ENCODE measurements at regions of chr14 and their contacts with region 1.

Region 1: GRCh38 chr14:100375963-100376735 is 53.0 kb downstream of the SLC25A47 start:
- DNase-seq: peak; percentile 93
- H3K4me3 ChIP-seq: peak within 1 kb of the TSS; percentile 75 to 83
- H3K27ac ChIP-seq: peak within 1 kb of the TSS; percentile 70 to 84
- H3K4me1 ChIP-seq: peaks cover 21% of the 10 kb centered on the region
- H3K27me3 ChIP-seq: no peaks in the 10 kb centered on the region
- CTCF ChIP-seq: peak in 1 of 3 experiments; percentile 12
- POLR2A ChIP-seq: no peak

Region 2: DNA sequence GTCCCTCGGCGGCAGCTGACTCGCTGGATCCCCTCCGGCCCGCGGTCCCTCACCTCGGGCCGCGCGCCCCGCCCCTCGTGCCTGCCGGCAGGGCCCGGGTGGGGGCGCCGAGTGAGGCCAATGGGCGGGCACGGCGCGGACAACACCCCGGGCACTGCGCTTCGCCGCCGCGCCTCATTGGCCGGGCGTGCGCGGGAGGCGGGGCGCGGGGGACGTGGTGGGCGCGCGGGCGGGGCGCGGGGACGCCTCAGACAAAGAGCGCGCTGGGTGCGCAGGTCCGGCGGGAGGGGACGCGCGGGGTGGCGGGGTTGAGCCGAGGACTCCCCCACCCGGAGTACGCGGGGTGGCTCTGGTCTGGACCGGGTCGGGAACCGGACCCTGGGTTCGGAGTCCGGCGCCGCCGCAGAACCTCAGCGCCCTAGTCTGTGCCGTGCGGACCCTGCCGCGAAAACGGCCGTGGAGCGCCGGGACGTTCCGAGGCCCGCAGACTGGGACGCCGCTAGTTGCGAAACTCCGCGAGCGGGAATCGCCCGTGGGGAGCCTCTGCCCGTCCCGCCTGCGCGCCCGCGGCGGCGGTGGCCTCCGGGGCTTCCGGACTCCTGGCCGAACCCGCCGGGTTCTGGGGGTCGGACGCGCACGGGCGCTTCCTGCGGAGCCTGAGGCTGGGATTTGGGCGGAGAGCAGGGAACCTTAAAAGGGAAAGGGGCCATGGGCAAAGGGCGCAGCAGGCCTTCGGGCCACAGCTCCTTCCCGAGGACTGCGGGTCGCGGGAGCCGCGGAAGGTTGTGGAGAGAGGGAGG is 69.5 kb before region 1 on chr14 and contains the start of gene SLC25A29:
- intact Hi-C with region 1: loop called (anchors 10 kb)
- DNase-seq: peak; percentile 93
- H3K4me3 ChIP-seq: peak within 1 kb of the TSS; percentile 84
- H3K27ac ChIP-seq: peak within 1 kb of the TSS; percentile 80 to 94
- H3K4me1 ChIP-seq: peaks cover 25% of the 10 kb centered on the region
- H3K27me3 ChIP-seq: no peaks in the 10 kb centered on the region
- CTCF ChIP-seq: no peak
- POLR2A ChIP-seq: no peak
- total RNA-seq, gene SLC25A29: 185 to 322 TPM

Region 3: GRCh38 chr14:101147848-101148826 is 772.0 kb after region 1 on chr14:
- intact Hi-C with region 1: no loop called
- DNase-seq: no peak
- H3K4me3 ChIP-seq: no peak overlapping the region
- H3K27ac ChIP-seq: no peak overlapping the region
- H3K4me1 ChIP-seq: no peaks in the 10 kb centered on the region
- H3K27me3 ChIP-seq: no peaks in the 10 kb centered on the region
- CTCF ChIP-seq: no peak
- POLR2A ChIP-seq: no peak

Region 4: GRCh38 chr14:101254805-101255764 is 878.9 kb after region 1 on chr14:
- intact Hi-C with region 1: no loop called
- DNase-seq: peak; percentile 84
- H3K4me3 ChIP-seq: no peak overlapping the region
- H3K27ac ChIP-seq: peak overlapping the region; percentile 19 to 83
- H3K4me1 ChIP-seq: peaks cover 17% of the 10 kb centered on the region
- H3K27me3 ChIP-seq: no peaks in the 10 kb centered on the region
- CTCF ChIP-seq: no peak
- POLR2A ChIP-seq: no peak

Measured in testis (tissue), 5 donors.